PC-9 (cell line): ENCODE measurements at regions of chr9 and their contacts with region 1.

Region 1: DNA sequence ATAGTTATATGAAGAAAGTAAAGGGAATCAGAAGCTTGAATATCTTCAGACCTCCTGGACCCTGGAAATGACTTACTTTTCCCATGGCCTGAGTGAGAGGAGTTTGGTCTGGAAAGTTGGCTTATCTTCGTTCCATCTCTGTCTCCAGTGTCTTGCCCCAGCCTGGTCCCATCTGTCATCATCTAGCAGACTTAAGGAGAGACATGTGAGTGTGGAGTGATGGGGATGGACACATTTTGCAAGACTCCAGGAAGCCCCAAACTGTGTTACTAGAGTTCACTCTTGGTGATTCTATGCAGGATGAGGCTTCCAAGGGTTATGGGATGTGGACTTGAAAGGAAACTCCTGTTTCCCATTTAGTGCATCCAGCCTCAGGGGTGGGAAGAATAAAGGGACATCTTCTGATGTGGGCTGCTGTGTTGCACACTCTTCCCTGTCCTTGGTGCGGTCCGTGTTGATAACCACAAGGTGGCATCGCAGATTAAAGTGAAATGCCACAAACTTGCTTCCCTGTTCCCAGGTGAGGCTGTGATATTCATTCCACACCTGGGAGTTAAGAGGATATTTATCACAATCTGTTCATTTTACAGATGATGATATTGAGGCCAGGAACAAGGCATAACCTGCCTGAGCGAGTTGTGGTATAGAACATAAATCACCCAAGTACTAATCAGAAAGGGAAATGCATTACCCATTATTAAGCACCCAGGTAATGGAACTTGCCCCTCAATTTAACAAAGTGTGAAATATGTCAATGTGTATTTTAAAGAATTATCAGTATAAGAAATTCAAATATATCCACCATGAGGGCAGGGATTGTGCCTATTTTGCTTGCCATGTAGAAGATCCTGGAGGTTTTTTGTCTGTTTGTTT is 269.9 kb upstream of the PAPPA start:
- DNase-seq: peak; percentile 50 to 53
- H3K4me3 ChIP-seq: no peak overlapping the region
- H3K27ac ChIP-seq: no peak overlapping the region
- H3K4me1 ChIP-seq: peaks cover 5% of the 10 kb centered on the region
- H3K27me3 ChIP-seq: no peaks in the 10 kb centered on the region
- CTCF ChIP-seq: peak; percentile 78

Region 2: DNA sequence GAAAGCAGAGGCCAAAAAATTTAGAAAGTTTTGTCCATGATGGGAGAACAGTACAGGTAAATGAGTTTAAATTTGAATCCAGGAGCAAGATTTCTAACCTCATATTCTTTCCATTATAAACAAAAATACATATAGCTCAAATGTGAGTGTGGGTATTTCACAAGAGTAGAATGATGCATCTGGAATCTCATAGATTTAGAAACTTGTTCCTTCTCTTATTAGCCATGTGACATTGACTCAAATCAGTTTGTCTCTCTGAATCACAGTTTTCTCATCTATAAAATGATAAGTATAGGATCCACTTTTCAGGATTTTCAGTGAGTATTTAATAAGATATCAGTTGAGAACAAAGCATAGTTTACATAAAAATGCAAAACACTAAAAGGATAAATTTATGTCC is 166.4 kb before region 1 on chr9:
- CTCF ChIA-PET with region 1: interaction called, 12 read pairs
- POLR2A ChIA-PET with region 1: no interaction called
- intact Hi-C with region 1: no loop called
- DNase-seq: no peak
- H3K4me3 ChIP-seq: no peak overlapping the region
- H3K27ac ChIP-seq: no peak overlapping the region
- H3K4me1 ChIP-seq: no peaks in the 10 kb centered on the region
- H3K27me3 ChIP-seq: no peaks in the 10 kb centered on the region
- CTCF ChIP-seq: no peak

Region 3: GRCh38 chr9:115832031-115832430 is 51.7 kb before region 1 on chr9:
- CTCF ChIA-PET with region 1: no interaction called
- POLR2A ChIA-PET with region 1: no interaction called
- intact Hi-C with region 1: no loop called
- DNase-seq: no peak
- H3K4me3 ChIP-seq: no peak overlapping the region
- H3K27ac ChIP-seq: no peak overlapping the region
- H3K4me1 ChIP-seq: no peaks in the 10 kb centered on the region
- H3K27me3 ChIP-seq: no peaks in the 10 kb centered on the region
- CTCF ChIP-seq: no peak

Region 4: DNA sequence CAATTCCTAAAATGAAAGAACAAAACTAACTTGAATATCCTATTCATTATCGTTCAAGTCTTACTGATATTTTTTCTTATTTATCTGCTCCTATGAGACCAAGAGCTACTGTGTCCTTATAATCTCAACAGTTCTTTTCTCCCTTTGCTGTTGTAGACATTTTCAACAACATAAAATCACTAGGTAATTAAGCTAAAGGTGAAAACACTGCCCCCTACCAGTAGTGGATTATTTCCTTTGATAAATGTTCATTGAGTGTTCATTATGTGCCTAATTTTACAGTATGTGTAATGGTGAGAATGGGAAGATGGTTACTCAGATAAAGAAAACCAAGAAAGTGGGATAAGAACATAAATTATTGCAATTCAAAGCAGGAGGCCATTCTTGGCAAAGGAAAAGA is 228.5 kb after region 1 on chr9:
- CTCF ChIA-PET with region 1: no interaction called
- POLR2A ChIA-PET with region 1: no interaction called
- intact Hi-C with region 1: loop called (anchors 5 kb)
- DNase-seq: no peak
- H3K4me3 ChIP-seq: no peak overlapping the region
- H3K27ac ChIP-seq: no peak overlapping the region
- H3K4me1 ChIP-seq: no peaks in the 10 kb centered on the region
- H3K27me3 ChIP-seq: no peaks in the 10 kb centered on the region
- CTCF ChIP-seq: peak; percentile 54

Region 5: DNA sequence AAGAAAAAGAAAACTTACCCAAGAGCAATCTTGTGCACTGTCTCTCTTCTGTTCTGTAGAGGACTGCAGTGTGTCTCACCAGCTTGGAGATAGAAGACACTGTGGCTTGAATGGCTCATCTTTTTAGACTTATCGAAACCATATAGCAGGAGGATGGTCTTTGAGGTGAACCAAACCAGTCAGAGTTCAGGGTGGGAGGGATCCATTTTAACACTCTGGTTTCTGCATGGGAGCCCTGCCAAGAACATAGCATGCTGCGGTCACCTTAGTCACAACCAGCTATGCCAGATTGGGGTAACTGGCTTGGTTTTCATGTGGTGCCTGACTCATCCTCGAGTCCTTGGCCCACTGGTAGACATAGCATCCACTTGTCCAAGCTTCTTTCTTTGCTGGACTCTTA is 405.0 kb after region 1 on chr9:
- CTCF ChIA-PET with region 1: no interaction called
- POLR2A ChIA-PET with region 1: no interaction called
- intact Hi-C with region 1: loop called (anchors 5 kb)
- DNase-seq: peak; percentile 66 to 69
- H3K4me3 ChIP-seq: no peak overlapping the region
- H3K27ac ChIP-seq: no peak overlapping the region
- H3K4me1 ChIP-seq: no peaks in the 10 kb centered on the region
- H3K27me3 ChIP-seq: no peaks in the 10 kb centered on the region
- CTCF ChIP-seq: no peak

Region 6: GRCh38 chr9:116558818-116559540 is 675.3 kb after region 1 on chr9:
- CTCF ChIA-PET with region 1: no interaction called
- POLR2A ChIA-PET with region 1: no interaction called
- intact Hi-C with region 1: no loop called
- DNase-seq: no peak
- H3K4me3 ChIP-seq: no peak overlapping the region
- H3K27ac ChIP-seq: no peak overlapping the region
- H3K4me1 ChIP-seq: no peaks in the 10 kb centered on the region
- H3K27me3 ChIP-seq: no peaks in the 10 kb centered on the region
- CTCF ChIP-seq: no peak

Region 7: GRCh38 chr9:116572095-116572748 is 688.5 kb after region 1 on chr9:
- CTCF ChIA-PET with region 1: no interaction called
- POLR2A ChIA-PET with region 1: no interaction called
- intact Hi-C with region 1: loop called (anchors 1 kb)
- DNase-seq: peak; percentile 57 to 75
- H3K4me3 ChIP-seq: no peak overlapping the region
- H3K27ac ChIP-seq: no peak overlapping the region
- H3K4me1 ChIP-seq: peaks cover 15% of the 10 kb centered on the region; the same call in 1 of the 2 replicates
- H3K27me3 ChIP-seq: no peaks in the 10 kb centered on the region
- CTCF ChIP-seq: peak; percentile 94